Gastrocnemius medialis (tissue), 4 donors: ENCODE measurements at regions of chr11 and their contacts with region 1.

Region 1: GRCh38 chr11:107043242-107044006 is 25.1 kb upstream of the GUCY1A2 start:
- DNase-seq: no peak
- ATAC-seq: no peak
- H3K4me3 ChIP-seq: no peak overlapping the region
- H3K27ac ChIP-seq: no peak overlapping the region
- H3K4me1 ChIP-seq: no peaks in the 10 kb centered on the region
- H3K27me3 ChIP-seq: peaks cover 0 to 2% (median 0%) of the 10 kb centered on the region in 3 donors
- CTCF ChIP-seq: no peak
- POLR2A ChIP-seq: no peak

Region 2: DNA sequence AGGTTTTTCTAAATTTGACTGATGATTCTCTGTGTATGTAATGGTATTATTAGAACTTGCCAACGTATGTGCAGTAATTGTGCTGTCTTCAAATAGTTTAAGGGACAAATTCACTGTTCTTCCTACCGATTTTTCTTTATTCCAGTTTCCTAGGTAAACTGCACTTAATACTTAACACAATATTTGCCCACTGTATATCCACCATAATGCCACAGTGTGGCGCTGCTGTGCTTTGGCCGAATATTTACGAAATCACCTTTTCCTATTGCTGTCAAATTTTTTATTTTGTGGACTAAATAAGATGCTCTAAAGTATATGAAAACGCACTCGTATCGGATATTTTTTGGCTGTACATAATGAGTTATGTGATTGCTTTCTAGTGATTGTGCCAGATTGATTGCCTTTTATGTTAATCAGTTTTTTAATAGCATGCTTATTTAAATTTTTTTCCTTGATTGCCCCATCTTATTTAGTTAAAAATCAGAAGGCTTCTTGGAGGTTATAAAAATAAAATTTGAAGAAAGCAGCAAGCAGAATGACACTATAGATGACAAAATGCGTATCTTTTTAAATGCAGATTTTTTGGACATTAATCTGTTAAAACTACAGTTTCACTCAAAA is 955.5 kb before region 1 on chr11:
- in situ Hi-C with region 1: no loop called
- intact Hi-C with region 1: loop called (anchors 5 kb)
- DNase-seq: peak in 1 of 2 donors; percentile 33
- ATAC-seq: peak in 1 of 2 donors; percentile 58
- H3K4me3 ChIP-seq: no peak overlapping the region
- H3K27ac ChIP-seq: peak overlapping the region in 1 of 4 donors; percentile 18
- H3K4me1 ChIP-seq: peaks cover 36 to 45% of the 10 kb centered on the region in 2 donors
- H3K27me3 ChIP-seq: no peaks in the 10 kb centered on the region
- CTCF ChIP-seq: peak; percentile 33 to 79 (median 61)
- POLR2A ChIP-seq: no peak

Region 3: DNA sequence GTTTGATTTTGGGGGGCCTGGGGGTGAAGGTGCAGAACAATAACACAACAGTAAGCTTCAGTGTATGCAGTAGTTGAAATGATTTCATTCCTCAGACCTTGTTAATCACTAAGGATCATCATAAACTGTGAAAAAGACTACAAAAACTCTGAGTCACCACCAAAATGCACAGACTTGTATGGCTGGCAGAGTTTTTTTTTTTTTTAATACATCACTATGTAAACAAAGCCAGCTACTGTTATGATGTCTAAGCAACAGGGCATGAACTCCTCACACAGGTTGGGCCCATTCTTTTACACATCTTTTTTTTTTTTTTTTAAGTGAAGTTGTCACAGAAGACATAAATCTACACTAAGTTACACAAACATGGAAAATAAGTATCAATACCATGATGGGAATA is 337.1 kb before region 1 on chr11:
- in situ Hi-C with region 1: loop called in 1 of 4 experiments (anchors 25 kb)
- intact Hi-C with region 1: no loop called
- DNase-seq: no peak
- ATAC-seq: no peak
- H3K4me3 ChIP-seq: no peak overlapping the region
- H3K27ac ChIP-seq: no peak overlapping the region
- H3K4me1 ChIP-seq: no peaks in the 10 kb centered on the region
- H3K27me3 ChIP-seq: no peaks in the 10 kb centered on the region
- CTCF ChIP-seq: no peak
- POLR2A ChIP-seq: no peak

Region 4: GRCh38 chr11:107011977-107012376 is 31.4 kb before region 1 on chr11:
- in situ Hi-C with region 1: no loop called
- intact Hi-C with region 1: no loop called
- DNase-seq: no peak
- ATAC-seq: no peak
- H3K4me3 ChIP-seq: no peak overlapping the region
- H3K27ac ChIP-seq: no peak overlapping the region
- H3K4me1 ChIP-seq: no peaks in the 10 kb centered on the region
- H3K27me3 ChIP-seq: peaks cover 0 to 10% (median 10%) of the 10 kb centered on the region in 3 donors
- CTCF ChIP-seq: no peak
- POLR2A ChIP-seq: no peak